ENCODE measurements at regions of chr3 and their contacts with region 1.

Region 1: GRCh38 chr3:112858410-112859069 is 11.9 kb upstream of the CD200R1L start:
- DNase-seq: no peak
- H3K4me3 Mint-ChIP-seq: peak overlapping the region; percentile 13
- H3K27ac Mint-ChIP-seq: peak overlapping the region; percentile 71
- H3K4me1 Mint-ChIP-seq: peaks cover 35% of the 10 kb centered on the region
- H3K27me3 Mint-ChIP-seq: no peaks in the 10 kb centered on the region

Region 2: GRCh38 chr3:112321867-112322649 is 536.5 kb before region 1 on chr3:
- intact Hi-C with region 1: no loop called
- DNase-seq: no peak
- H3K4me3 Mint-ChIP-seq: no peak overlapping the region
- H3K27ac Mint-ChIP-seq: no peak overlapping the region
- H3K4me1 Mint-ChIP-seq: peaks cover 6% of the 10 kb centered on the region
- H3K27me3 Mint-ChIP-seq: peaks cover 2% of the 10 kb centered on the region

Region 3: DNA sequence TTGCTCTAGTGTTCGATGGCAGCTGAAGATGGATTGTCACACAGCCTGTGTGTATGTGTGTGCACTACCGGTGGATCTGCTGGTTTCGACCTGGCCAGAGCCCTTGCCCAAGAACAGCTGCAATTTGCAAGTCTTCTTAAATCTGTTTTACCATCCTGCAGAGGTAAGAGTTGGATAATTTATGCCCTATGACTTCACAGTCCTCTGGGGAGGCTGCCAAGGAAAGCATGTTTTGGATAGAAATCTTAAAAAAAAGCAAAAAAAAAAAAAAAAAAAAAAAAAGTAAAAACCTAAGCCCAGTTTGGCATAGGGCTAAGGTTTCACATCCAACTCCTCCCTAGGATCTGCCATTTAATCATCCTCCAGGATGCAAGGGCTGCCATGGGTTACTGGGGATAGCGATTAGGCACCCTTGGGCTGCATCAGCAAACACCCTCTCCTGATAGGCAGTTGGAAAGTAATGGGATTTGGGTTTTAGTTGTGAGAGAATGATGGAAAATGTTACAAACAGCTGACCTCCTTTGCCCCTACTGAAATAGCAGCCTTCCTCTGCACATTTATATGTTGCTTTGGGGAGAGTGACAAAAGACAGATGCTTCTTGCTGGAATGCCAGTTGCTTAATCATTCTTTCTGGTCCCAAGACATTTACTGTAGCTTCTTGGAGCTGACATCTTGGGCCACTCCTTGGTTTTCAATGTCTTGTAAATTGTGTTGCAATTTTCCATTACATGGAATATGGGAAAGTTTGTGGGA is 47.2 kb before region 1 on chr3:
- intact Hi-C with region 1: no loop called
- DNase-seq: no peak
- H3K4me3 Mint-ChIP-seq: no peak overlapping the region
- H3K27ac Mint-ChIP-seq: no peak overlapping the region
- H3K4me1 Mint-ChIP-seq: peaks cover 34% of the 10 kb centered on the region
- H3K27me3 Mint-ChIP-seq: peaks cover 3% of the 10 kb centered on the region

Region 4: GRCh38 chr3:112847692-112848091 is 10.8 kb before region 1 on chr3:
- intact Hi-C with region 1: loop called (anchors 1 kb)
- DNase-seq: peak; percentile 20
- H3K4me3 Mint-ChIP-seq: no peak overlapping the region
- H3K27ac Mint-ChIP-seq: peak overlapping the region; percentile 73
- H3K4me1 Mint-ChIP-seq: peaks cover 23% of the 10 kb centered on the region
- H3K27me3 Mint-ChIP-seq: no peaks in the 10 kb centered on the region